HEK293T (cell line): ENCODE measurements at regions of chr12 and their contacts with region 1.

Region 1: GRCh38 chr12:17204289-17205054 is 598.5 kb upstream of the LMO3 start:
- DNase-seq: no peak

Region 2: GRCh38 chr12:17192721-17193120 is 11.8 kb before region 1 on chr12:
- CTCF ChIA-PET with region 1: no interaction called
- POLR2A ChIA-PET with region 1: no interaction called
- DNase-seq: no peak

Region 3: DNA sequence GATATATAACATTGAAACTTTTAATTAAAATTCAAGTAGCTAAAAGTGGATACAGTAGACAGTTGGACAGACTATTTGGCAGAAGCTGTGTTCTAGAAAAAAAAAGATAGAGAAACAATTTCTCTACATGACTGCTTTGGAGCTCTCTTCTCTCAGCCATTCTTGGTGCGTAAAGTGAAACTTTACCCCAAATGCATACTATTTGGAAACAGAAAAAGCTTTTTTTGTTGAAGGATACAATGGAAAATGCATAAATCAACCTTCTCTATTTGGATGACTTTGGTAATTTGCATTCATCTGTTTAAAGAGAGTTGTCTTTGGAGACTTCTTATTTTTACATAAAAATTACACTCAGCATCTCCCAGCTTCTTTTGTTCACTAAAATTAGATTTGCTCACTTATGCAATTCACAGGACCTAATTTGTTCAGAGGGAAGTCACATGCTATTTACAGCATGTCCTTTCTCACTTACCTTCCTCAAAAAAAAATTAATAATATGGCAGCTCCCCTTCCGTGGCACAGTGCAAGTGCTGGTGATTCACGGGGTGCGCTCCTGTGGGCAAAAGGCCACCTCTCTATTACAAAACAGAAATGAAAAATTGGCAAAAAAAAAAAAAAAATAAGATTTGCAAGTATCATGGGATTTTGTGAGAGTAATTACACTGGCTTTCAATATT is 386.7 kb after region 1 on chr12:
- CTCF ChIA-PET with region 1: interaction called, 10 read pairs
- POLR2A ChIA-PET with region 1: no interaction called
- DNase-seq: no peak